A549 (cell line): ENCODE measurements at regions of chr7 and their contacts with region 1.

Region 1: GRCh38 chr7:129468087-129468486 is 33.9 kb downstream of the STRIP2 start:
- DNase-seq: no peak
- ATAC-seq: no peak
- H3K4me3 ChIP-seq: no peak overlapping the region
- H3K27ac ChIP-seq: no peak overlapping the region
- H3K4me1 ChIP-seq: peaks cover 10% of the 10 kb centered on the region; the same call in 1 of the 3 replicates
- CTCF ChIP-seq: no peak
- EP300 ChIP-seq: no peak
- POLR2A ChIP-seq: no peak
- RAD21 ChIP-seq: no peak

Region 2: GRCh38 chr7:129240119-129240815 is 227.8 kb before region 1 on chr7:
- CTCF ChIA-PET with region 1: no interaction called
- POLR2A ChIA-PET with region 1: no interaction called
- DNase-seq: no peak
- ATAC-seq: no peak
- H3K4me3 ChIP-seq: no peak overlapping the region
- H3K27ac ChIP-seq: no peak overlapping the region
- H3K4me1 ChIP-seq: no peaks in the 10 kb centered on the region
- CTCF ChIP-seq: no peak
- EP300 ChIP-seq: no peak
- POLR2A ChIP-seq: no peak
- RAD21 ChIP-seq: no peak

Region 3: DNA sequence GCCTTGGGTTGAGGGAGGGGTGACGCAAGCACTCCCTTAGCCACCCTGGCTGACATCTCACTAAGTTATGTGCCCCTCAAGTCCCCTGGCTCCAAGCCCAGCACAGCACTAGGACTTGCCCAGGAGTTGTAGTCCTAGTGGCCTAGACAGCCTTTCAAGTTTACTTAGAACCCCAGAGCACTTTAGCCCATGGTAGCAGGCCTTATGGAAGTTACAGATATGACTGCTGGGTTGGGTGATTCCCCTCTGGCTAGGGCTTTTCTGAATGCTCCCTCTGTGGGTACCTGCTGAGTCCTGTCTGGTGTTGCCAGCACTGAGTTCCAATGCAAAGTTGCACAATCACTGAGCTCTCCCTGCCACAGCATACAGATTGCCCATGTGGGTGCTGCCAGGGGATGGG is 160.0 kb before region 1 on chr7:
- CTCF ChIA-PET with region 1: no interaction called
- POLR2A ChIA-PET with region 1: no interaction called
- DNase-seq: no peak
- ATAC-seq: no peak; a peak in 1 of 6 replicates
- H3K4me3 ChIP-seq: no peak overlapping the region
- H3K27ac ChIP-seq: no peak overlapping the region
- H3K4me1 ChIP-seq: no peaks in the 10 kb centered on the region
- CTCF ChIP-seq: no peak
- EP300 ChIP-seq: no peak
- POLR2A ChIP-seq: no peak
- RAD21 ChIP-seq: no peak

Region 4: GRCh38 chr7:129359638-129360037 is 108.4 kb before region 1 on chr7:
- CTCF ChIA-PET with region 1: interaction called, 14 read pairs
- POLR2A ChIA-PET with region 1: no interaction called
- DNase-seq: no peak
- ATAC-seq: no peak
- H3K4me3 ChIP-seq: no peak overlapping the region
- H3K27ac ChIP-seq: no peak overlapping the region
- H3K4me1 ChIP-seq: no peaks in the 10 kb centered on the region
- CTCF ChIP-seq: no peak
- EP300 ChIP-seq: no peak
- POLR2A ChIP-seq: no peak
- RAD21 ChIP-seq: no peak

Region 5: DNA sequence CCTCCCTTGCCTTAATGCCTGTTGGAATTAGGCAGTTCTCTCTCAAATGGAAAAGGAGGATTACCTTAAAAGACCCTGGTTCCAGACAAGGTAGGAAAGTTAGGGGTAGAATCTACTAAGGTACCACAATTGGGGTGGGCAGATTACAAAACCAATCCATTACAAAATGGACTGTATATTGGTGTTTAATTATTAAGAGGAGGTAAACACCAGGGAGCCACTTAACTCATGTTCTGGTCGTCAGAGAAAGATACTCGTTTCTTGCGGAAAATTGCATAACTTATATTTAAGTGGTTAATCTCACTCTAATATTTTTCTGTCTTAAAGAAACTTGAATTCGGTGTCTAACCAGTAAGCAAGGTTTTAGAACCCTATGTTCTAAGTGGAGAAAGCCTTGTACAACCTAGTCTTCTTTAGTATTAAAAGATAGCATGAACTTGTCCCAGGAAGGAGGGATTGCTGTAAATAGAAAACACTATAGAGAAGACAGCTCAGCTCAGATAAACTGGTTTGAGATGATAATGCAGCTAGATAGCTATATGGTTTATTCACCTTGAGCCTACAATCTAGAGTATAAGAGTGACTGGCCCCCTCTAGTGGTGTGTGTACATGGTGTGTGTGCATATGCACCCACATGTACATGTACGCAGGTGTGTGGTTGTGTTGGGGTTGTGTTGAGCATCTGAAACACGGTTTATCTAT is 91.9 kb before region 1 on chr7:
- CTCF ChIA-PET with region 1: interaction called, 129 read pairs
- POLR2A ChIA-PET with region 1: no interaction called
- DNase-seq: peak; percentile 61 to 65
- ATAC-seq: peak; percentile 91 to 97
- H3K4me3 ChIP-seq: no peak overlapping the region
- H3K27ac ChIP-seq: no peak overlapping the region
- H3K4me1 ChIP-seq: peaks cover 3% of the 10 kb centered on the region; the same call in 1 of the 3 replicates
- CTCF ChIP-seq: peak; percentile 65
- EP300 ChIP-seq: no peak
- POLR2A ChIP-seq: no peak
- RAD21 ChIP-seq: peak in 1 of 2 experiments; percentile 49; a peak in 2 of 5 replicates

Region 6: GRCh38 chr7:129450295-129450694 is 17.8 kb before region 1 on chr7:
- CTCF ChIA-PET with region 1: interaction called, 12 read pairs
- POLR2A ChIA-PET with region 1: no interaction called
- DNase-seq: no peak
- ATAC-seq: no peak
- H3K4me3 ChIP-seq: no peak overlapping the region
- H3K27ac ChIP-seq: no peak overlapping the region
- H3K4me1 ChIP-seq: no peaks in the 10 kb centered on the region
- CTCF ChIP-seq: no peak
- EP300 ChIP-seq: no peak
- POLR2A ChIP-seq: no peak
- RAD21 ChIP-seq: no peak

Region 7: DNA sequence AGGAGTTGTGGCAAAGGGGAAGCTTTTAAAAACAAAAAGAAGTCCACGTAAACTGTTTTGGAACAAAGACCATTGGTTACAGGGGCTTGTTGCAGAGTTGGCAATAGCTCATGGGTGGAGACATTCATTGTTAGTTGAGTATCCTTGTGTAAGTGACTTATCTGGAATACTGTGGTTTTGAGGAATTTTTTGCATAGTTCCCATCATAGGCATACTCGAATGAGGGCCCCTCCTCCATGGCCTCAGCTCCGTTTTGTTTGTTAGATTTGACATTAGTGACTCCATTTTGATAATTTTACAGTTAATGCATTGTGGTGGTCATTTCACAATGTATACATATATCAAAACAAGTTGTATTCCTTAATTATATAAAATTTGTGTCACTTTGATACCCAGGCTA is 21.4 kb after region 1 on chr7:
- CTCF ChIA-PET with region 1: interaction called, 13 read pairs
- POLR2A ChIA-PET with region 1: no interaction called
- DNase-seq: no peak
- ATAC-seq: no peak
- H3K4me3 ChIP-seq: no peak overlapping the region
- H3K27ac ChIP-seq: no peak overlapping the region
- H3K4me1 ChIP-seq: no peaks in the 10 kb centered on the region
- CTCF ChIP-seq: no peak
- EP300 ChIP-seq: no peak
- POLR2A ChIP-seq: no peak
- RAD21 ChIP-seq: no peak

Region 8: DNA sequence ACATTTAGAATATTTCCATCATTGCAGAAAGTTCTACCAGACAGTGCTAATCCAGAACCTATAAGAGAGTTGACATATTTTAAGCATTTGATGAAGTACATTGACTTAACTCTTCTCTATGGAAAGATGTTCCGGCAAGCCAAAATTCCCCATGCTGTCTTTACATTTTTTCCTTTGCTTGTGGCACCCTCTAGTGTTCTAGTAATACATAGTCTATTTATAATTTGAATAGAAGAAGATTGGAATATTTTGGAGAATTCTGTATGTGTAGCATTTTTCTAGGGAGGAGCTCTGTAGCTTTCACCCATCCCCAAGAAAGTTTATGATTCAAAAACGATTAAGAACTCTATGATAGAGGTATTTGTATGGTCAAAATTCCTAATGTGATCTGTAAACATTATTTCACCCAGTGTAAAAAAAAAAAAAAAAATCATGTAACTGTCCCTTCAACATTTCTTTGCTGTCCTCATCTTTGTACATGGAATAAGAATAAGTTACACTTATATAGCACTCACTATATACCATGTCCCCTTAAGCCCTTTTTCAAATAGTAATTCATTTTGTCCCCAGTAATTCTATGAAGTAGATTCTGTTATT is 176.6 kb after region 1 on chr7:
- CTCF ChIA-PET with region 1: interaction called, 22 read pairs
- POLR2A ChIA-PET with region 1: no interaction called
- DNase-seq: peak in 1 of 2 experiments; percentile 55
- ATAC-seq: peak in 1 of 2 experiments; percentile 67; a peak in 3 of 6 replicates
- H3K4me3 ChIP-seq: no peak overlapping the region
- H3K27ac ChIP-seq: no peak overlapping the region
- H3K4me1 ChIP-seq: peaks cover 28% of the 10 kb centered on the region; the same call in 2 of the 3 replicates
- CTCF ChIP-seq: peak; percentile 79
- EP300 ChIP-seq: no peak
- POLR2A ChIP-seq: no peak
- RAD21 ChIP-seq: peak; percentile 81